ENCODE measurements at regions of chr1 and their contacts with region 1.

Region 1: DNA sequence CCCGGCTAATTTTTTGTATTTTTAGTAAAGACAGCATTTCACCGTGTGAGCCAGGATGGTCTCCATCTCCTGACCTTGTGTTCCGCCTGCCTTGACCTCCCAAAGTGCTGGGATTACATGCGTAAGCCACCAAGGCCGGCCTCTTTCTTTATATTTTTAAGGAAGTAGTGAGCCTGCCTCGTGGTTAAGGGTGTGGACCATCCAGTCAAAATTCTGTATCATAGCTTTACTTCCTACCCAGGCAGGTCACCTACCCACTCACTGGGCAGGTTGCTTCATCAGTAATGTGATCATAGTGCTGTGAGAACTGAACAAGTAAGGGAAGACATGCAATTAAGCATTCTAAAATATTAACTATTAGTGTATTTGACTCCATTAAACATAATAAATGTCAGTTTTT is 8.1 kb upstream of the ACOT7 start:
- DNase-seq: no peak
- H3K4me3 ChIP-seq: no peak overlapping the region
- H3K27ac ChIP-seq: no peak overlapping the region
- H3K4me1 ChIP-seq: no peaks in the 10 kb centered on the region
- H3K27me3 ChIP-seq: no peaks in the 10 kb centered on the region
- CTCF ChIP-seq: no peak
- EP300 ChIP-seq: no peak
- RAD21 ChIP-seq: no peak

Region 2: GRCh38 chr1:6350416-6351088 is 51.1 kb before region 1 on chr1:
- CTCF ChIA-PET with region 1: interaction called, 20 read pairs
- POLR2A ChIA-PET with region 1: no interaction called
- DNase-seq: peak; percentile 10
- H3K4me3 ChIP-seq: no peak overlapping the region
- H3K27ac ChIP-seq: no peak overlapping the region
- H3K4me1 ChIP-seq: peaks cover 0 to 44% of the 10 kb centered on the region in 2 experiments; a peak in 1 of 4 replicates
- H3K27me3 ChIP-seq: no peaks in the 10 kb centered on the region
- CTCF ChIP-seq: no peak
- EP300 ChIP-seq: no peak
- RAD21 ChIP-seq: no peak

Region 3: DNA sequence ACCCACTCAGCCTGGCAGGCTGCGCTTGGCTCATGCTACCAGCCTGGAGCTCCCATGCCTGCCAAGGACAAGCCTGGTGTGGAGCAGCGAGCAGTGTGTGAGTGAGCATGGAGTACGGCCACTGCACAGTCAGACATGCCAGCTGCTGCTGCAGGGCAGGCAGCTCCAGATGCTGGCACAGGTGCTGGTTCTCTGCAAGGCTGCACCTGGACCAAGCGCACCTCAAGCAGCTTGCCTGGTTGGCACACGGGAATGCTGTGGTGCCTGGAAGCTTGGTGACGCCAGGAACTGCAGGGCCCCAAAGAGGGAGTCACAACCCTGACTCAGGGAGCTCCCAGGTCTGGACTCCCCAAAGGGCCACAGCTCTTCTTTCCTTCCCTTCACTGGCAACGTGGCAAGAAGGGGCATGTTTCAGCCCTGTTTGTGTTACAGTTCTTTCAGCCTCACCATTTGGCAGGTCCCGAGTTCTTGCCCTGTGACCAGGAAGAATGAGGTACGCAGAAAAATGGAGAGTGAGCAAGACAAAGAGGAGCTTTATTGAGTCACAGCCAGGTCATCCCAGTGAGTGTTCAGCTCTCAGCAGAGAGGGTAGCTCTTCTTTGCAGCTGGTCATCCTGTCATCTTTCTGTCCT is 34.2 kb before region 1 on chr1:
- CTCF ChIA-PET with region 1: interaction called, 65 read pairs
- POLR2A ChIA-PET with region 1: no interaction called
- DNase-seq: no peak
- H3K4me3 ChIP-seq: no peak overlapping the region
- H3K27ac ChIP-seq: no peak overlapping the region
- H3K4me1 ChIP-seq: peaks cover 0 to 7% of the 10 kb centered on the region in 2 experiments; a peak in 1 of 4 replicates
- H3K27me3 ChIP-seq: no peaks in the 10 kb centered on the region
- CTCF ChIP-seq: no peak
- EP300 ChIP-seq: no peak
- RAD21 ChIP-seq: no peak

Region 4: GRCh38 chr1:6414443-6414844 is 12.8 kb after region 1 on chr1:
- CTCF ChIA-PET with region 1: interaction called, 25 read pairs
- POLR2A ChIA-PET with region 1: no interaction called
- DNase-seq: peak; percentile 87
- H3K4me3 ChIP-seq: no peak overlapping the region
- H3K27ac ChIP-seq: no peak overlapping the region
- H3K4me1 ChIP-seq: peaks cover 0 to 6% of the 10 kb centered on the region in 2 experiments; a peak in 1 of 4 replicates
- H3K27me3 ChIP-seq: peaks cover 17% of the 10 kb centered on the region
- CTCF ChIP-seq: peak; percentile 59
- EP300 ChIP-seq: no peak
- RAD21 ChIP-seq: peak; percentile 50

Region 5: DNA sequence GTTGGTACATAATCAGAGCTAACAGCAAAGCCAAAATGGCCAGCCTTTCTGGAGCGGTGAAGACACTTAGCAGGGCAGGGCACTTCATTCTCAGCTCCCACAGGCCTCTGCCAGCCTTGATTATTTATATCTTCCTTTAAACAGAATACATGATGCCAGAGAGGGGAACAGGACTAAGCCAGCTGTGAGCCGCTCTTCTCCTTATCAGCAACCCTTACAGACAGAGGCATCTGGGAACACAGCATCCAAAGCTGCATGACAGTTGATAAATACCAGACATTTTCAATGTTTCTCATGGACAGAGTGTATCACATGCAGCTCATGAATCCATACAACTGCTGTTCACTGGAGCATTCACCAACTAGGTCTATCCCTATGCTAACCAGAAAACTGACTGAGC is 270.9 kb after region 1 on chr1:
- CTCF ChIA-PET with region 1: no interaction called
- POLR2A ChIA-PET with region 1: no interaction called
- DNase-seq: peak; percentile 84
- H3K4me3 ChIP-seq: no peak overlapping the region
- H3K27ac ChIP-seq: peak overlapping the region; percentile 13 to 96; a peak in 3 of 4 replicates
- H3K4me1 ChIP-seq: peaks cover 0 to 27% of the 10 kb centered on the region in 2 experiments; a peak in 2 of 4 replicates
- H3K27me3 ChIP-seq: no peaks in the 10 kb centered on the region
- CTCF ChIP-seq: no peak
- EP300 ChIP-seq: peak in 1 of 2 experiments; percentile 98; a peak in 2 of 4 replicates
- RAD21 ChIP-seq: peak; percentile 40

Measured in SK-N-SH (cell line).